ENCODE measurements at regions of chr2 and their contacts with region 1.

Region 1: DNA sequence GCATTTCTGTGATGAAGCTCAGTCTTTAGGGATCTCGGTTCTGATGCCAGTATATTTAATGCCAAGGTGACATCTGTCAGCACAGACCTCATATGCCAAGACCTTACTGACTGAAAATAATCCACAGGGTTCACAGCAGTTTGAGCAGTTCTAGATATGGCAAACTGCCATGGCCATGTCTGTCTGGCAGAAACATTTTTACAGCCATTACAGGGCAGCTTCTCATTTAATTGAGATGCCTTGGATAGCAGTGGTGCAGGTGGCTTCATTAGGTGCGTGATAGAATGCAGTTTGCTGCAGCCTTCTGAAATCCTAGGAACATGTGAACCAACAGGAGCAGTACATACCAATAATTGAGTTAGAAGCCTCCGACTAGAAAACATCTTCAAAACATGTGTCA is 510.6 kb downstream of the XIRP2 start:
- DNase-seq: no peak
- ATAC-seq: no peak

Region 2: GRCh38 chr2:167318581-167318980 is 80.3 kb before region 1 on chr2:
- intact Hi-C with region 1: no loop called
- DNase-seq: no peak
- ATAC-seq: no peak

Region 3: GRCh38 chr2:167380094-167380493 is 18.8 kb before region 1 on chr2:
- intact Hi-C with region 1: loop called (anchors 1 kb)
- DNase-seq: no peak
- ATAC-seq: no peak